HCT116 (cell line): ENCODE measurements at regions of chr10 and their contacts with region 1.

Region 1: DNA sequence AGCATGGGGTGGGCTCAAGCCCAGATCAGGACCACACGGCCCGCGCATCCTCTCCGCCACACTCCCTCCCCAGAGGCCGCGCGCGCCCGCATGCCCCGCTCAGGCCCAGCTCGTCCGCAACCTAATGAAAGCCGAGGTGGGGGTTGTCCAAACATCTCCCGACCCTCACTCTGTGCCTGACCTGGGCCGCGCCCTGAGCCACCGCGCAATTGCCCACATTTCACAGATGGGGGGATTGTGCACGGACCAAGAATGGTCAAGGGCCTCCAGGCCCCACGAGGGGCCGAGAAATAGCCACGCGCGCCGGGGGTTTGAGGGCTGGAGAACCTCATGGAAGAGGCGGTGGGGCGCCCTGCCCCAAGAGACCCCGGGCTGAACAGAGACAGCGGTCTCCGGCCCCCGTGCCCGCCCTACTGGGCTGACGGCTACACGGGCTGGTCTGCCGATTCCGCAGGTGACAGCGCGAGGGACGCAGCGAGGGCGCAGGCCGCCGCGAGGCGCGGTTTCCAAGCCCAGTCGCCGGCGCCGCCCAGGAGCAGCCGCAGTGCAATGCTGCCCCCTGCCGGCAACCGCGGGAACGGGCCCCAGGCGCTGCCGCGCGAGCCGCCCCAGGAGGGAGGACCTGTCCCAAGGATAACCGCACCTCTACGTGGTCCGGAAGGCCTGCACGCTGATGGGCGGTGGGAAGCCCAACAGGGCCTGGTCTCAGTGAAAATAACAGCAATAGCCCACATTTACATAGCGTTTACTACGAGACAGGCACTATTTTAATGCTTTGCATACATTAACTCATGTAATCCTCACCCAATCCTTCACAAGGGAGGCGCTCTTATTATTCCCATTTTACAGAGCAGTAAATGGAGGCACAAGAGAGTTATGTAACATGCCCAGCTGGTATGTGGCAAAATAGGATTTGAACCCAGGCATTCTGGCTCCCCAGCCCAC is 10.5 kb upstream of the GRID1 start:
- DNase-seq: peak; percentile 56
- ATAC-seq: peak; percentile 98
- H3K4me3 ChIP-seq: no peak overlapping the region
- H3K27ac ChIP-seq: no peak overlapping the region
- H3K4me1 ChIP-seq: peaks cover 0 to 9% of the 10 kb centered on the region in 2 experiments; a peak in 2 of 4 replicates
- H3K27me3 ChIP-seq: no peaks in the 10 kb centered on the region
- CTCF ChIP-seq: peak; percentile 92 to 96 (median 96)
- POLR2A ChIP-seq: no peak
- RAD21 ChIP-seq: peak; percentile 99

Region 2: DNA sequence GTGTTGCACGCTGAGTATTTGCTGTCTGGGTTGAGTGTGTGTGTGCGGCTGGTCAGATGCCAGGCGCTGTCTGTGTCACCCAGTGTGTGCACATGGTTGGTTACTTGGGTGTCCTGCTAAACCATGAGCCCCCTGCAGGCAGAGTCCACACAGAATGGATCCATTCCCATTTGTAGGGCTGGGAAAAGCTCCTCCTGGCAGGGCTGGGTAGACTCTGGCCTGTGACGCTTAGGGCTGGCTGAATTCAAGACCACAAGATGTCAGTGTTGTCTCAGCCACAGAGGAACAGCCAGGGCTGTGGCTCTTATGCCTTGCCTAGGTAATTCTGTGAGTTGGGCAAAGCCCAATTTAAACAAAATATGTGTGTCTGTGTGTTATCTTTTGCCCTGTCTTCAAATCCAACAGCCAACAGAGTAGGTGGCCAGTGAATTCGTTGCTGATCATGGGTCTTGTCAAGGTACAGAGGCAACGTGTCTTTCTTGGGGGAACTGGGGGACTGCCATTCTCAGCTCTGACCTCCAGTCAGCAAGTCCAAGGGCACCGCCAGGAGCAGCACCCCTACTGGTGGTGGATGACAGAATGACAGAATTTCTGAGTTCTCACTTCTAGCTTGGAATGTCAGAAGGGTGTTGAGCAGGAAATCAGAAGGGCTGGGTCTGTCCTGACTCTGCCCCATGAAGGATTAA is 1763.6 kb before region 1 on chr10:
- CTCF ChIA-PET with region 1: no interaction called
- POLR2A ChIA-PET with region 1: no interaction called
- RAD21 ChIA-PET with region 1: no interaction called
- intact Hi-C with region 1: loop called (anchors 5 kb)
- DNase-seq: peak; percentile 72
- ATAC-seq: peak; percentile 98
- H3K4me3 ChIP-seq: no peak overlapping the region
- H3K27ac ChIP-seq: no peak overlapping the region
- H3K4me1 ChIP-seq: peaks cover 0 to 4% of the 10 kb centered on the region in 2 experiments; a peak in 1 of 4 replicates
- H3K27me3 ChIP-seq: peaks cover 13% of the 10 kb centered on the region
- CTCF ChIP-seq: peak; percentile 47 to 80 (median 59)
- POLR2A ChIP-seq: no peak
- RAD21 ChIP-seq: peak; percentile 81

Region 3: GRCh38 chr10:85548034-85548433 is 829.1 kb before region 1 on chr10:
- CTCF ChIA-PET with region 1: no interaction called
- POLR2A ChIA-PET with region 1: no interaction called
- RAD21 ChIA-PET with region 1: no interaction called
- intact Hi-C with region 1: loop called (anchors 5 kb)
- DNase-seq: peak; percentile 52
- ATAC-seq: peak; percentile 100
- H3K4me3 ChIP-seq: no peak overlapping the region
- H3K27ac ChIP-seq: no peak overlapping the region
- H3K4me1 ChIP-seq: no peaks in the 10 kb centered on the region
- H3K27me3 ChIP-seq: peaks cover 18% of the 10 kb centered on the region
- CTCF ChIP-seq: peak; percentile 52 to 63 (median 61); a peak in 5 of 6 replicates
- POLR2A ChIP-seq: no peak
- RAD21 ChIP-seq: peak; percentile 84

Region 4: GRCh38 chr10:85995791-85996190 is 381.3 kb before region 1 on chr10:
- CTCF ChIA-PET with region 1: no interaction called
- POLR2A ChIA-PET with region 1: no interaction called
- RAD21 ChIA-PET with region 1: no interaction called
- intact Hi-C with region 1: loop called (anchors 1 kb)
- DNase-seq: peak; percentile 29
- ATAC-seq: peak; percentile 89
- H3K4me3 ChIP-seq: no peak overlapping the region
- H3K27ac ChIP-seq: no peak overlapping the region
- H3K4me1 ChIP-seq: no peaks in the 10 kb centered on the region
- H3K27me3 ChIP-seq: peaks cover 8% of the 10 kb centered on the region; the same call in 1 of the 2 replicates
- CTCF ChIP-seq: peak; percentile 58 to 64 (median 59); a peak in 5 of 6 replicates
- POLR2A ChIP-seq: no peak
- RAD21 ChIP-seq: peak; percentile 65

Region 5: GRCh38 chr10:86178401-86179152 is 198.5 kb before region 1 on chr10:
- CTCF ChIA-PET with region 1: no interaction called
- POLR2A ChIA-PET with region 1: no interaction called
- RAD21 ChIA-PET with region 1: no interaction called
- intact Hi-C with region 1: loop called (anchors 5 kb)
- DNase-seq: peak; percentile 4
- ATAC-seq: peak; percentile 96
- H3K4me3 ChIP-seq: no peak overlapping the region
- H3K27ac ChIP-seq: no peak overlapping the region
- H3K4me1 ChIP-seq: peaks cover 0 to 3% of the 10 kb centered on the region in 2 experiments; a peak in 1 of 4 replicates
- H3K27me3 ChIP-seq: no peaks in the 10 kb centered on the region
- CTCF ChIP-seq: peak; percentile 44 to 72 (median 63); a peak in 5 of 6 replicates
- POLR2A ChIP-seq: no peak
- RAD21 ChIP-seq: peak; percentile 56

Region 6: GRCh38 chr10:86254526-86255174 is 122.5 kb before region 1 on chr10:
- CTCF ChIA-PET with region 1: no interaction called
- POLR2A ChIA-PET with region 1: no interaction called
- RAD21 ChIA-PET with region 1: no interaction called
- intact Hi-C with region 1: no loop called
- DNase-seq: peak; percentile 70
- ATAC-seq: peak; percentile 93
- H3K4me3 ChIP-seq: 0 out of 4 replicates have a peak overlapping the region, but pooled peaks of 1 of the 2 experiments have one; percentile 5
- H3K27ac ChIP-seq: no peak overlapping the region
- H3K4me1 ChIP-seq: peaks cover 20 to 25% of the 10 kb centered on the region in 2 experiments
- H3K27me3 ChIP-seq: no peaks in the 10 kb centered on the region
- CTCF ChIP-seq: no peak
- POLR2A ChIP-seq: no peak
- RAD21 ChIP-seq: no peak; the same call in 1 of the 2 replicates